Left cardiac atrium (tissue), 4 donors: ENCODE measurements at regions of chrX and their contacts with region 1.

Region 1: DNA sequence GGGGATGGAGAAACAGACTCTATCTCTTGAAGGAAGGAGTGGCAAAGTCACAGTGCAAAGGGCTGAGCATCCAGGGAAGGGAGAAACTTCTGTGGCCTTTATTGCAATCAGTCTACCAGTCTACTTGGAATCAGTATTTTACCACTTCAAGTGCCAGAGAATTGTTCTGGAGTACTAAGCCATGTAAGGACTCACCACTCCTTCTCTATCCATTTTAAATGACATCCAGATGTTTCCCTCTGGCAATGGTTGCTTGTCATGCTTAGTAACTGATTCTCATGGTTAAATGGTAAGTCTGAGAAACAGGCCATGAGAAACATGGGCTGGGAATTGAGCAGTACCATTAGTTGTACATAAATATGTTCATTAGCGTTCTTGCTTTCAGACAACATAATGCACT is 21.1 kb upstream of the SMIM10 start:
- DNase-seq: no peak
- ATAC-seq: no peak

Region 2: GRCh38 chrX:135003876-135004623 is 34.3 kb after region 1 on chrX:
- intact Hi-C with region 1: loop called in 1 of 2 experiments (anchors 5 kb)
- DNase-seq: peak; percentile 92
- ATAC-seq: peak; percentile 98 to 99

Region 3: DNA sequence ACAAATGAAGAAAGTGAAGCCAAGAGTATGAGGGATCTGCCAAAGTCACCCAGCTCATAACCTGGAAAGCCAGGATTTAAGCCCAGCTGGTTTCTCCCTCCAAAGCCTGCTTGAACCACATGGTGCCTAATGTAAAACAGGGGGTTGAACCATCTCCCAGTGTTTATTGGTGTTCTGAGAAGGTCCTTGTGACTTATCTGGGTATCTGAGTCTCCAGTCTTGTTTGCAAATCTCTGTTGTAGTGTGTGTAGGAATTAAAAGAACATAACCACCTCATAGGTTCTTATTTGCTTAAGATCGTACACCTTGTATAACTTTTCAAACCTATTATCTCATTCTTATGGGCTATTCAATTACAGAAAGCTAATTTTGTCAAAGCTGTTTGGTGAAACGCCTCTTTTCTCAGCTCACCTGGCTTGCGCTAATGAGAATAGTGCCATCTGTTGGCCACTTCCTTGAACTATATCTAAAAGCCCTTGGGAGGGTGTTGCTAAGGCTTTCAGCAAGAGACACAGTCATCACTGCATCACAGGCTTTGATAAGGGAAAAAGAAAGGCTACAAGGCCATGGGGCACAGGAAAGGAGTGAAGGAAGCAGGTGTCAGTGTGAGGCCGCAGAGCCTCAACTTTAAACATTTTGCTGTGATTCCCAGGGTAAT is 116.6 kb after region 1 on chrX:
- intact Hi-C with region 1: loop called in 1 of 2 experiments (anchors 2 kb)
- DNase-seq: no peak
- ATAC-seq: peak; percentile 68 to 79